Caco-2 (cell line): ENCODE measurements at regions of chr18 and their contacts with region 1.

Region 1: GRCh38 chr18:35005963-35006577 is 35.1 kb upstream of the MAPRE2 start:
- DNase-seq: peak in 1 of 2 experiments; percentile 40
- H3K4me3 ChIP-seq: no peak overlapping the region
- H3K4me3 Mint-ChIP-seq: no peak overlapping the region
- H3K27ac Mint-ChIP-seq: no peak overlapping the region
- H3K4me1 ChIP-seq: no peaks in the 10 kb centered on the region
- H3K4me1 Mint-ChIP-seq: no peaks in the 10 kb centered on the region
- H3K27me3 ChIP-seq: no peaks in the 10 kb centered on the region
- H3K27me3 Mint-ChIP-seq: no peaks in the 10 kb centered on the region
- CTCF ChIP-seq: peak; percentile 26 to 34

Region 2: GRCh38 chr18:34880882-34881834 is 124.9 kb before region 1 on chr18:
- CTCF ChIA-PET with region 1: no interaction called
- POLR2A ChIA-PET with region 1: no interaction called
- intact Hi-C with region 1: loop called (anchors 10 kb)
- DNase-seq: no peak
- H3K4me3 ChIP-seq: no peak overlapping the region
- H3K4me3 Mint-ChIP-seq: no peak overlapping the region
- H3K27ac Mint-ChIP-seq: no peak overlapping the region
- H3K4me1 ChIP-seq: no peaks in the 10 kb centered on the region
- H3K4me1 Mint-ChIP-seq: no peaks in the 10 kb centered on the region
- H3K27me3 ChIP-seq: no peaks in the 10 kb centered on the region
- H3K27me3 Mint-ChIP-seq: no peaks in the 10 kb centered on the region
- CTCF ChIP-seq: peak in 1 of 2 experiments; percentile 18

Region 3: DNA sequence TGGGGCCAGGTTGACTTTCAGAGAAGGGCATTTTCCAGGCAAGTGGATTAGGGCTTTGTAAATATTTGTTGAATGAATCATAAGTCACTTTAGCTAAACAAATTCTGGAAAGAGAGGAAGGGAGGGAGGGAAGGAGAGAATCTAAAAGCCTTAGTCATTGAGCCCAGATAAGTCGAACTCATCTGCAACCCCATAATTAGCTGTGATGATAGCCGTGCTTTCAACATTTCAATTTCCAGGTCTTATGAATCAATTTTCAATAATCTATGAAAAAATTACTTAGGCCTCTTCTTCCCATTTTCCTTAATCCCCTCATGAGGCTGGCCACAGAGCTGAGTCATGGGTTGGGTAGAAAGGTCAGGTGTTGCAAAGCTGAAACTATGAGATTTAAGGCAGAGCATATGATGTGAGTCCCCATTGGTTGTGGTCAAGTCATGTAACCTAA is 76.7 kb before region 1 on chr18:
- CTCF ChIA-PET with region 1: no interaction called
- POLR2A ChIA-PET with region 1: no interaction called
- intact Hi-C with region 1: no loop called
- DNase-seq: peak; percentile 32 to 36
- H3K4me3 ChIP-seq: no peak overlapping the region
- H3K4me3 Mint-ChIP-seq: peak overlapping the region; percentile 11
- H3K27ac Mint-ChIP-seq: no peak overlapping the region
- H3K4me1 ChIP-seq: peaks cover 20% of the 10 kb centered on the region
- H3K4me1 Mint-ChIP-seq: peaks cover 10% of the 10 kb centered on the region
- H3K27me3 ChIP-seq: no peaks in the 10 kb centered on the region
- H3K27me3 Mint-ChIP-seq: no peaks in the 10 kb centered on the region
- CTCF ChIP-seq: no peak